IMR-90 (cell line): ENCODE measurements at regions of chr1 and their contacts with region 1.

Region 1: DNA sequence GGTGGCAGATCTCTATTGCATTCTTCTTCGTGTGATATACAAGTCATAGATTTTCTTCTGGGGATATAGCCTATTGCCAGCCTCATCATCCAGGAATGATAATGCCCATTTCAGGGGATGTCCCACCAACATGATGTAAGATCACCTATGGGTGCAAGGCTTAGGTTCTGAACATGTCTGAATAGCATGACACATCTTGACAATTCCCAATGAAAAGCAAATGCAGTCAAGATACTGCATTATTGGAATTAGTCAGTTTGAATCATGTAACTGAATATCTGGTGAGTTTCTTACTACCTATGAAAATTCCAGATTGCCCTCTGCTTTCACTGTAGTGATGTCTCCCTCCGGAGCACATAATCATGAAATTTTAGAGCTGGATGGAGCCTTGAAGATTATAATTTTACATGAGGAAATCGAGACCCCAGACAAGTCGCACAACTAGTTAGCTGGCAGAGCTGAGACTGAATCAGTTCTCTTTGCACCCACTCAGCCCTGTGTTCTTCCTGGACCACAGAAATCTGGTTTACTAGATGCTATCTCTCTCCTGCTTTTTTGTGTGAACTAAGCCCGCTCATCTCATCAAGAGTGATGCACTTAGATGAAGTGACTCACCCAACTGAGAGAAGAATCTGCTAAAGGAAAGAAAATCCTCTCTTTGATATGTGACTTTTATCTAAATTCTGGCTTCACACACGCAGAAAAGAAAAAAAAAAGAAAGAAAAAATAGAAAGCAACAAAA is 65.0 kb downstream of the WDR64 start:
- DNase-seq: no peak
- ATAC-seq: no peak
- H3K4me3 ChIP-seq: no peak overlapping the region
- H3K27ac ChIP-seq: no peak overlapping the region
- H3K4me1 ChIP-seq: no peaks in the 10 kb centered on the region
- H3K27me3 ChIP-seq: no peaks in the 10 kb centered on the region
- CTCF ChIP-seq: no peak
- POLR2A ChIP-seq: no peak
- RAD21 ChIP-seq: no peak

Region 2: DNA sequence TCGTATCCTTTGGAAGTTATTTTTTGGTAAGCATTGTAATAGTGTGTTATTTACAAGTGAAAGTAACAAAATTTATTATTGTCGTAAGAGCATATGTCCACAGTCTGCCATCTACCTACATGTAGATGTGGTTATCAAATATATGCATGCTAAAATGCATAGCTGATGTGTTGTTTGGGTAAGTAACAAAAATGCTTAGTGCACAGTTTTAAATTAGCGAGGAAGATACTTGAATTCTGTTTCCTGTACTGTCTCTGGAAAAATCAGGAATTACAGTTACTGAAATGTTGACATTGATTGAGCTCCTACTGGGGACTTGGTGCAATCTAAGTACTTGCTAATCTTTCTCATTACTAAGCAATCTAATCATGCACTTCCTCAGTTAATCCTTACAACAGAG is 50.7 kb before region 1 on chr1:
- CTCF ChIA-PET with region 1: interaction called, 5 read pairs
- POLR2A ChIA-PET with region 1: no interaction called
- dilution Hi-C with region 1: no loop called
- in situ Hi-C with region 1: no loop called
- intact Hi-C with region 1: loop called (anchors 5 kb)
- DNase-seq: no peak
- ATAC-seq: no peak
- H3K4me3 ChIP-seq: no peak overlapping the region
- H3K27ac ChIP-seq: no peak overlapping the region
- H3K4me1 ChIP-seq: no peaks in the 10 kb centered on the region
- H3K27me3 ChIP-seq: no peaks in the 10 kb centered on the region
- CTCF ChIP-seq: no peak
- POLR2A ChIP-seq: no peak
- RAD21 ChIP-seq: no peak

Region 3: DNA sequence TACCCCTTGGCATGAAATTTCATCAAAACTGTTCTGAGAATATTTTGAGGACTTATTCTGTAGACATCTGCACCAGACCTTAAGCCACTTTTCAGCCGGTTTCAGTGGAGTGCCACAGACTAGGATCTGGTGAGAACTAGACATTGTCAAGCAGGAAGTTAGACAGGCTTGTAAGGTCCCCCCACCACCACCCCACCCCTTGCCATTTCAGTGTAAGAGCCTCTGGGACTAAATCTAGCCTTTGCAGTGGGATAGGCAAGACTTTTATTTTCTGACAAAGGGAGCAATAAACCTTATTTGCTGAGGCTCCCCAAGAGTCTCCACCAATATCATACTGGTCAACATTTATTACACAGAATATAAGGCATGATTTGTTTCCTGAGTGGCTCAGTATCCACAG is 53.0 kb after region 1 on chr1:
- CTCF ChIA-PET with region 1: no interaction called
- POLR2A ChIA-PET with region 1: no interaction called
- dilution Hi-C with region 1: no loop called
- in situ Hi-C with region 1: no loop called
- intact Hi-C with region 1: no loop called
- DNase-seq: no peak
- ATAC-seq: no peak
- H3K4me3 ChIP-seq: no peak overlapping the region
- H3K27ac ChIP-seq: no peak overlapping the region
- H3K4me1 ChIP-seq: no peaks in the 10 kb centered on the region
- H3K27me3 ChIP-seq: peaks cover 3% of the 10 kb centered on the region
- CTCF ChIP-seq: no peak
- POLR2A ChIP-seq: no peak
- RAD21 ChIP-seq: no peak